CD4-positive, alpha-beta T cell (primary cell): ENCODE measurements at regions of chr17 and their contacts with region 1.

Region 1: GRCh38 chr17:7862692-7863437 is 5.1 kb downstream of the CYB5D1 start:
- DNase-seq: peak in 9 of 14 experiments; percentile 31 to 70 (median 44)
- ATAC-seq: no peak
- H3K4me3 ChIP-seq: no peak overlapping the region
- H3K4me3 Mint-ChIP-seq: no peak overlapping the region
- H3K27ac ChIP-seq: no peak overlapping the region
- H3K27ac Mint-ChIP-seq: no peak overlapping the region
- H3K4me1 ChIP-seq: peaks cover 17% of the 10 kb centered on the region
- H3K4me1 Mint-ChIP-seq: peaks cover 18% of the 10 kb centered on the region
- H3K27me3 ChIP-seq: no peaks in the 10 kb centered on the region
- H3K27me3 Mint-ChIP-seq: no peaks in the 10 kb centered on the region
- CTCF ChIP-seq: peak; percentile 97

Region 2: GRCh38 chr17:7782237-7782636 is 80.6 kb before region 1 on chr17:
- CTCF ChIA-PET with region 1: no interaction called
- POLR2A ChIA-PET with region 1: no interaction called
- intact Hi-C with region 1: no loop called
- DNase-seq: no peak
- ATAC-seq: no peak
- H3K4me3 ChIP-seq: no peak overlapping the region
- H3K4me3 Mint-ChIP-seq: no peak overlapping the region
- H3K27ac ChIP-seq: no peak overlapping the region
- H3K27ac Mint-ChIP-seq: no peak overlapping the region
- H3K4me1 ChIP-seq: no peaks in the 10 kb centered on the region
- H3K4me1 Mint-ChIP-seq: no peaks in the 10 kb centered on the region
- H3K27me3 ChIP-seq: peaks cover 0 to 10% of the 10 kb centered on the region in 2 experiments
- H3K27me3 Mint-ChIP-seq: peaks cover 7% of the 10 kb centered on the region
- CTCF ChIP-seq: no peak

Region 3: GRCh38 chr17:7873051-7873450 is 10.2 kb after region 1 on chr17:
- CTCF ChIA-PET with region 1: interaction called, 11 read pairs
- POLR2A ChIA-PET with region 1: interaction called, 4 read pairs
- intact Hi-C with region 1: no loop called
- DNase-seq: no peak
- ATAC-seq: no peak
- H3K4me3 ChIP-seq: no peak overlapping the region
- H3K4me3 Mint-ChIP-seq: no peak overlapping the region
- H3K27ac ChIP-seq: no peak overlapping the region
- H3K27ac Mint-ChIP-seq: no peak overlapping the region
- H3K4me1 ChIP-seq: peaks cover 12% of the 10 kb centered on the region
- H3K4me1 Mint-ChIP-seq: peaks cover 28% of the 10 kb centered on the region
- H3K27me3 ChIP-seq: no peaks in the 10 kb centered on the region
- H3K27me3 Mint-ChIP-seq: no peaks in the 10 kb centered on the region
- CTCF ChIP-seq: no peak

Region 4: DNA sequence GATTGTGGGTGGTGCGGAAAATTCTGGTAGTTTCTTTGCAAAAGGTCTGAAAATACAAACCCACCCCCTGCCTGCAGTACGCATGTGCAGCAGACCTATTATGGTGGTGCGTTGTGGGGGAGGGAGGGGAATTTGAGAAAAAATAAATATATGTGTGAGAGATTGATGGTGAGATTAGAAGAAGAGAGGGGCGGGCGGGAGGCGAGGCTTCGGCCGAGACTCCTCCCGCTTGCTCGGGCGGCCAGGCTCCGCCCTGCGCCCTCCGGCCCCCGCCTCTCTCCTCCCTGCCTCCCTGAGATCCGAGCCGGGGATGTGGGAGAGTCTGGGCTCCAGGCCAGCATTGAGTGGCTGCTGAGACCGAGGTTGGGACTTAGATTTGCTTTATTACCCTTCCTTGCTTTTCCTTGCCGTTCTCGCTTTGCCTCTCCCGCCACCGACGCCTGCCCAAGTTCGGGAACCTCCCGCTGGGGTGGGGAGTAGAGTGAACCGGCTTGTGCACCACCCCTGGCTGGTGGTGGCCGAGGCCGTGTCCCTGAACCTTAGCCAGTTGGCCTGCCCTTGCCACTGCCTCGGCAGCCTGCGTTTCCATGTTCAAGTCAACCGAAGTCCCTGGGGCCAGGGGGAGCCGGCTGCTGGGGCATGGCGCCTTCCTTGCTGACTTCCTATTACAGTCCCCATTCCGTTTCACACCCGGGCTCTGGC is 24.8 kb after region 1 on chr17:
- CTCF ChIA-PET with region 1: interaction called, 5 read pairs
- POLR2A ChIA-PET with region 1: interaction called, 13 read pairs
- intact Hi-C with region 1: loop called (anchors 1 to 2 kb)
- DNase-seq: peak; percentile 72 to 97 (median 86)
- ATAC-seq: peak; percentile 69
- H3K4me3 ChIP-seq: peak overlapping the region; percentile 98
- H3K4me3 Mint-ChIP-seq: no peak overlapping the region
- H3K27ac ChIP-seq: peak overlapping the region; percentile 75 to 96
- H3K27ac Mint-ChIP-seq: no peak overlapping the region
- H3K4me1 ChIP-seq: peaks cover 49% of the 10 kb centered on the region
- H3K4me1 Mint-ChIP-seq: peaks cover 6% of the 10 kb centered on the region
- H3K27me3 ChIP-seq: no peaks in the 10 kb centered on the region
- H3K27me3 Mint-ChIP-seq: no peaks in the 10 kb centered on the region
- CTCF ChIP-seq: no peak

Region 5: GRCh38 chr17:8041249-8041928 is 178.5 kb after region 1 on chr17:
- CTCF ChIA-PET with region 1: no interaction called
- POLR2A ChIA-PET with region 1: no interaction called
- intact Hi-C with region 1: loop called in 1 of 2 experiments (anchors 5 kb)
- DNase-seq: peak in 8 of 14 experiments; percentile 17 to 72 (median 44)
- ATAC-seq: peak; percentile 37
- H3K4me3 ChIP-seq: no peak overlapping the region
- H3K4me3 Mint-ChIP-seq: no peak overlapping the region
- H3K27ac ChIP-seq: no peak overlapping the region
- H3K27ac Mint-ChIP-seq: no peak overlapping the region
- H3K4me1 ChIP-seq: peaks cover 4% of the 10 kb centered on the region
- H3K4me1 Mint-ChIP-seq: peaks cover 4% of the 10 kb centered on the region
- H3K27me3 ChIP-seq: peaks cover 11 to 21% of the 10 kb centered on the region in 2 experiments
- H3K27me3 Mint-ChIP-seq: peaks cover 40% of the 10 kb centered on the region
- CTCF ChIP-seq: peak; percentile 50

Region 6: DNA sequence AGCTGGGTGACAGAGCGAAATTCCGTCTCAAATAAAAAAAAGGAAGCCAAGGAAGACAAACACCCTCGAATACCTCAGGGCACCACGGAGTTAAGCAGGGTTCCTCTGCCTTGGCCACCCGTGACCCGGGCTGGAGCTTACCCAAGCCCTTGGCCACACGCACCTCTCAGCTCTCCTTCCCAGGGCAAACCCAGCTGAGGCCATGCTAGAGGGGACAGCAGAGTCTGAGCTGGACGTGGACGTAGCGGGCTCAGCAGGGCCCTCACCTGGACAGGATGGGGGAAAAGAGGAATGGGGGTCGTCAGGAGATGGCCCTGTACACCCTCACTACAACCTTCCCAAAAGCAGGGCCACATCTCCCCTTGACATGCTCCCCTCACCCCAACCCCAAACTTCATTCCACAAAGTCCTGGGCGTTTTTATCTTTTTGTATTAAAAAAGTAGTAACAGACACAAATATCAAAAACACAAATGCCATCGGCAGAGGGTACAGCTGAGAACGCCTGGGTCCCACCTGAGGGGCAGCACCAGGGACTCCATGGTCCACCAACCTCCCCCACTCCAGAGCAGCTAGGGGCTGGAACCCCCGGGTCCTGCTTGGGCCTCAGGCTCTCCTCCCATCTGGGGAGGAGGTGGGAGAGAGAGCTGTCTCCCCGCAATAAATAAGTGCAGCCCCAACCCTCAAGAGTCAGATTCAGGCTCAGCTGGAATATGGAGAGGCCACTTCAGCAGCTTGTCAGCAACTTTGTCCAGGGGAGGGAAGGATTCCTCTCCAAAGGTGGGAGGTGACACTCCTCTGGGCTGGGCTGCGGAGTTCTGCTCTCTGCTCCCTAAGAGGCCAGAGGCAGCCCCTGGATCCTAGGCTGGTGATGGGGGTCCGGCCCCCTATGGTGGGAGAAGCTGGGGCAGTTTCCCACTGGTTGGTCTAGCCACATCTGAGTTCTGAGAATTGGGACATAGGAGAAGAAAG is 277.5 kb after region 1 on chr17:
- CTCF ChIA-PET with region 1: no interaction called
- POLR2A ChIA-PET with region 1: no interaction called
- intact Hi-C with region 1: no loop called
- DNase-seq: peak in 2 of 14 experiments; percentile 36 to 63
- ATAC-seq: no peak
- H3K4me3 ChIP-seq: no peak overlapping the region
- H3K4me3 Mint-ChIP-seq: peak overlapping the region; percentile 70
- H3K27ac ChIP-seq: no peak overlapping the region
- H3K27ac Mint-ChIP-seq: no peak overlapping the region
- H3K4me1 ChIP-seq: peaks cover 26% of the 10 kb centered on the region
- H3K4me1 Mint-ChIP-seq: peaks cover 5% of the 10 kb centered on the region
- H3K27me3 ChIP-seq: no peaks in the 10 kb centered on the region
- H3K27me3 Mint-ChIP-seq: peaks cover 3% of the 10 kb centered on the region
- CTCF ChIP-seq: no peak